Activated CD8-positive, alpha-beta T cell treated with anti-CD3 and anti-CD28 coated beads for 36 hours (primary cell): ENCODE measurements at regions of chr19 and their contacts with region 1.

Region 1: GRCh38 chr19:1064661-1065605 is 2.0 kb upstream of the ARHGAP45 start:
- DNase-seq: peak; percentile 76
- ATAC-seq: peak; percentile 25
- H3K4me3 Mint-ChIP-seq: peak overlapping the region; percentile 9
- H3K27ac Mint-ChIP-seq: no peak overlapping the region
- H3K4me1 Mint-ChIP-seq: peaks cover 32% of the 10 kb centered on the region
- H3K27me3 Mint-ChIP-seq: no peaks in the 10 kb centered on the region
- CTCF ChIP-seq: peak; percentile 83

Region 2: DNA sequence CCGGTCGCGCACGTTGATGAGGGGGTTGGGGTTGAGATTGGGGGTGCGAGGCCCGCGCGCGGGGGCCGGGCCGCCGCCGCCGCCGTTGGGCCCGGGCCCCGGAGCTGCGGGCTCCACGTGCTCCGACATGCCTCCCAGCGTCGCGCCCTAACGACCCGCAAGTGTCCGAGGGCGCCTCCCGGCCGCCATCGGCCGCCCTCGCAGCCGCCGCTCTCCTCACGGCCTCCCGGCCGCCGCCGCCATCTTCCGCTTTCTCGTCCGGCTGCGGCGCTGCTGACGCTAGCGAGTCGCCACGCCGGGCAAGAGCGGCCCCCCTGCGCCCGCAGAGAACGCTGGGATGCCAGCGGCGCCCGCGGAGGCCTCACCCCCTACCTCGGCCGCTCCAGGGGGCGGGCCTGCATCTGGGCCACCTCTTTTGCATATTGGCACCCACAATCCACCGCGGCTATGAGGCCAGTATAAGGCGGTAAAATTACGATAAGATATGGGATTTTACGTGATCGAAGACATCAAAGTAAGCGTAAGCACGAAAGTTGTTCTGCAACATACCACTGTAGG is 44.0 kb before region 1 on chr19 and contains the start of gene TMEM259:
- CTCF ChIA-PET with region 1: interaction called, 3 read pairs
- POLR2A ChIA-PET with region 1: interaction called, 11 read pairs
- intact Hi-C with region 1: no loop called
- DNase-seq: peak; percentile 98
- ATAC-seq: peak; percentile 88
- H3K4me3 Mint-ChIP-seq: peak within 1 kb of the TSS; percentile 96
- H3K27ac Mint-ChIP-seq: peak within 1 kb of the TSS; percentile 99
- H3K4me1 Mint-ChIP-seq: peaks cover 34% of the 10 kb centered on the region
- H3K27me3 Mint-ChIP-seq: no peaks in the 10 kb centered on the region
- CTCF ChIP-seq: no peak
- total RNA-seq, gene TMEM259: 115 to 117 TPM

Region 3: DNA sequence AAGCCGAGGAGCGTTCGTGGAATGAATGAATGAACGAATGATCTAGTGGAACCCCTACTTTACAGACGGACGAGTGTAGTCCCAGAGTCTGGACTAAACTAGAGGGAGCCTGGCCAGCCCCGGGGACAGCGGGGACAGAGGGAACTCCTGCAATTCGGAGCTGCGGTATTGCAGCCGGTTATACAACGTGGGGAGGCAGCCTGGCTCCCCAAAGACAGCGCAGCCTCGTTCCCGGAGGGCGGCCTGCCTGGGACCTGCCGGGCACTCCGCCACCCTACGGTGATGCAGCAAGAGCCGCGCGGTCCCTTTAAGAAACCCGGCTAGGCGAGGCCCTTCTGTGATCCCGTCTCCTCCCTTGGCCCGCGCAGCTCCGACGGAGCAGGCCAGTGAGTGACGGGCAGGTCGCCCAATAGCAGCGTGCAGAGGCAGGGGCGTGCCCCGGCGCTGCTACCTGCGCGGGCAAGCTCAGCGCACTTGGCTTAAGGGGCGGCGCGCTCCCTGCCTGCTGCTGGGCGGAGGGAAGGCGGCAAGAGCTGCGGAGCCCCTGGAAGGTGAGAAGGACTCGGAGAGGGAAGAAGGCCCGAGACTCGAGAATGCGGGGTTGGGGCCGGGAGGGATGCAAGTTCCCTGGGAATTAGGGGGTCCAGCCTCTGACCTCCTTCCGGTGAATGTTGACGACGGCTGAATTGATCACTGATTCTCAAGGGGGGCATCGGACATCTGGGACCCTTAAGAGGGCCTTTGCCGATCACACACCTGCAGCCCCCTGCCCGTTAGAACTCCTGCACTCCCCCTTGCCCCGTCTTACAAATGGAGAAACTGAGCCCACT is 25.1 kb before region 1 on chr19 and contains the start of gene ABCA7:
- CTCF ChIA-PET with region 1: interaction called, 7 read pairs
- POLR2A ChIA-PET with region 1: interaction called, 26 read pairs
- intact Hi-C with region 1: no loop called
- DNase-seq: peak; percentile 99
- ATAC-seq: peak; percentile 96
- H3K4me3 Mint-ChIP-seq: peak within 1 kb of the TSS; percentile 91
- H3K27ac Mint-ChIP-seq: peak within 1 kb of the TSS; percentile 82
- H3K4me1 Mint-ChIP-seq: peaks cover 43% of the 10 kb centered on the region
- H3K27me3 Mint-ChIP-seq: no peaks in the 10 kb centered on the region
- CTCF ChIP-seq: no peak
- total RNA-seq, gene ABCA7: 14.0 to 14.6 TPM

Region 4: DNA sequence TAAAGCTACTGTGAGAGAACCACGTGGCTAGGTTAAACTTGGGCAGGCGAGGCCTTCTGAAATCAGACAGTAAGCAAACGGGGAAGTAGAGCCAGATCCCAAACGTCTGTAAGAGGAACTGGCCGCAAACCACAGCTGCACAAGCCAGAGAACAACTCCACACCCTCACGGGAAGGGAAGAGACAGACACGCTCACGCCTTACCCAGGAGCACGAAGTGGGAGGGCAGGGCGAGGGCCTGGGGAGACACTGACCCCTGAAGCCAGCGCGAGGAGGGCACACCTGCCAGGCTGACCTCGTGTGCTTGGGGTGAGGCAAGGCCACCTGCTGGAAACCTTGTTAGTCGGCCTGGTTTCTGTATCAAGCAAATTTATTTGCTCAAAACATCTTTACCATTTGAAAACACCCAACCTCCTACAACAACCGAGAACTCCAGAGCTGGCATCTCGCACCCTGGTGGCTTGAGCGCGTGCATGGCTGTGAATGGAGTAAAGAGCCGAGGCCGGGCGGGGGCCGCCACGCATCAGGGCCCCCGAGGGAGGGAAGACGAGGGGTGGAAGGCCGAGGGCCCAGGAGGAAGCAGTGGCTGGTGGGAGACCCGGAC is 23.0 kb after region 1 on chr19:
- CTCF ChIA-PET with region 1: interaction called, 22 read pairs
- POLR2A ChIA-PET with region 1: interaction called, 148 read pairs
- intact Hi-C with region 1: no loop called
- DNase-seq: peak; percentile 55
- ATAC-seq: peak; percentile 15
- H3K4me3 Mint-ChIP-seq: peak overlapping the region; percentile 2
- H3K27ac Mint-ChIP-seq: peak overlapping the region; percentile 84
- H3K4me1 Mint-ChIP-seq: peaks cover 58% of the 10 kb centered on the region
- H3K27me3 Mint-ChIP-seq: no peaks in the 10 kb centered on the region
- CTCF ChIP-seq: no peak

Region 5: GRCh38 chr19:1103708-1104310 is 38.9 kb after region 1 on chr19 and contains the start of gene GPX4:
- CTCF ChIA-PET with region 1: interaction called, 4 read pairs
- POLR2A ChIA-PET with region 1: interaction called, 23 read pairs
- intact Hi-C with region 1: no loop called
- DNase-seq: peak; percentile 99
- ATAC-seq: peak; percentile 82
- H3K4me3 Mint-ChIP-seq: peak within 1 kb of the TSS; percentile 71
- H3K27ac Mint-ChIP-seq: peak within 1 kb of the TSS; percentile 89
- H3K4me1 Mint-ChIP-seq: peaks cover 48% of the 10 kb centered on the region
- H3K27me3 Mint-ChIP-seq: no peaks in the 10 kb centered on the region
- CTCF ChIP-seq: no peak
- total RNA-seq, gene GPX4: 224 to 232 TPM